CD4-positive, alpha-beta T cell (primary cell): ENCODE measurements at regions of chr10 and their contacts with region 1.

Region 1: GRCh38 chr10:11145495-11145855 is 127.8 kb downstream of the CELF2 start:
- DNase-seq: peak; percentile 47 to 89 (median 64)
- ATAC-seq: peak; percentile 63
- H3K4me3 ChIP-seq: peak overlapping the region; percentile 15
- H3K4me3 Mint-ChIP-seq: peak overlapping the region; percentile 73
- H3K27ac ChIP-seq: peak overlapping the region; percentile 89 to 91
- H3K27ac Mint-ChIP-seq: peak overlapping the region; percentile 97
- H3K4me1 ChIP-seq: peaks cover 94% of the 10 kb centered on the region
- H3K4me1 Mint-ChIP-seq: peaks cover 97% of the 10 kb centered on the region
- H3K27me3 ChIP-seq: no peaks in the 10 kb centered on the region
- H3K27me3 Mint-ChIP-seq: no peaks in the 10 kb centered on the region
- CTCF ChIP-seq: no peak

Region 2: GRCh38 chr10:11017570-11018431 is 127.7 kb before region 1 on chr10 and contains the start of gene CELF2:
- CTCF ChIA-PET with region 1: no interaction called
- POLR2A ChIA-PET with region 1: interaction called, 11 read pairs
- intact Hi-C with region 1: no loop called
- DNase-seq: peak in 13 of 14 experiments; percentile 8 to 77 (median 36)
- ATAC-seq: peak; percentile 78
- H3K4me3 ChIP-seq: peak within 1 kb of the TSS; percentile 32
- H3K4me3 Mint-ChIP-seq: peak within 1 kb of the TSS; percentile 84
- H3K27ac ChIP-seq: no peak within 1 kb of the TSS
- H3K27ac Mint-ChIP-seq: no peak within 1 kb of the TSS
- H3K4me1 ChIP-seq: peaks cover 9% of the 10 kb centered on the region
- H3K4me1 Mint-ChIP-seq: peaks cover 28% of the 10 kb centered on the region
- H3K27me3 ChIP-seq: peaks cover 30 to 77% of the 10 kb centered on the region in 2 experiments
- H3K27me3 Mint-ChIP-seq: peaks cover 77% of the 10 kb centered on the region
- CTCF ChIP-seq: no peak
- total RNA-seq, gene CELF2: 197 to 205 TPM

Region 3: DNA sequence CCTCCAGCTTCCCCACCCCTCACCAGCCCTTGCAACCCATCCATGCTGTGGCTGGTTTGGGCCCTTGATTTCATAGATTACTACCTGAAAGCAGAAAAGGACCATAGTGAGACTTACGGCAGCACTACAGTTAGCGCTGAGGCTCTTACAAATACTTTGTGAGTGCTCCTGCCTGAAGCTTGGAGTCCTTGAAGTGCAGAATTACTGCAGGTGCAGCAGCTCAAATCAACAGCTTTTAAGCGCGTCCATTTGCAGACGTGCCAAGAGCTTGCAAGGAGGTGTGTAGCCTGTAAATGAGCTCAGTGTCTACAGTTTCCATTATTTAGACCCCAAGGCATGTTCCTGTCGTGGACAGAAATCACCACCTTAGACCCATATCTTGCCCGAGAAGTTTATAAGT is 24.8 kb before region 1 on chr10:
- CTCF ChIA-PET with region 1: interaction called, 4 read pairs
- POLR2A ChIA-PET with region 1: interaction called, 17 read pairs
- intact Hi-C with region 1: no loop called
- DNase-seq: peak in 1 of 14 experiments; percentile 16
- ATAC-seq: peak; percentile 48
- H3K4me3 ChIP-seq: no peak overlapping the region
- H3K4me3 Mint-ChIP-seq: no peak overlapping the region
- H3K27ac ChIP-seq: no peak overlapping the region
- H3K27ac Mint-ChIP-seq: peak overlapping the region; percentile 78
- H3K4me1 ChIP-seq: no peaks in the 10 kb centered on the region
- H3K4me1 Mint-ChIP-seq: peaks cover 49% of the 10 kb centered on the region
- H3K27me3 ChIP-seq: no peaks in the 10 kb centered on the region
- H3K27me3 Mint-ChIP-seq: no peaks in the 10 kb centered on the region
- CTCF ChIP-seq: no peak